ENCODE measurements at regions of chr9 and their contacts with region 1.

Region 1: GRCh38 chr9:121322037-121322775 is 47.8 kb downstream of the STOM start:
- DNase-seq: no peak
- ATAC-seq: peak; percentile 18
- H3K4me3 Mint-ChIP-seq: no peak overlapping the region
- H3K27ac Mint-ChIP-seq: no peak overlapping the region
- H3K4me1 Mint-ChIP-seq: peaks cover 14% of the 10 kb centered on the region
- H3K27me3 Mint-ChIP-seq: no peaks in the 10 kb centered on the region
- CTCF ChIP-seq: no peak

Region 2: DNA sequence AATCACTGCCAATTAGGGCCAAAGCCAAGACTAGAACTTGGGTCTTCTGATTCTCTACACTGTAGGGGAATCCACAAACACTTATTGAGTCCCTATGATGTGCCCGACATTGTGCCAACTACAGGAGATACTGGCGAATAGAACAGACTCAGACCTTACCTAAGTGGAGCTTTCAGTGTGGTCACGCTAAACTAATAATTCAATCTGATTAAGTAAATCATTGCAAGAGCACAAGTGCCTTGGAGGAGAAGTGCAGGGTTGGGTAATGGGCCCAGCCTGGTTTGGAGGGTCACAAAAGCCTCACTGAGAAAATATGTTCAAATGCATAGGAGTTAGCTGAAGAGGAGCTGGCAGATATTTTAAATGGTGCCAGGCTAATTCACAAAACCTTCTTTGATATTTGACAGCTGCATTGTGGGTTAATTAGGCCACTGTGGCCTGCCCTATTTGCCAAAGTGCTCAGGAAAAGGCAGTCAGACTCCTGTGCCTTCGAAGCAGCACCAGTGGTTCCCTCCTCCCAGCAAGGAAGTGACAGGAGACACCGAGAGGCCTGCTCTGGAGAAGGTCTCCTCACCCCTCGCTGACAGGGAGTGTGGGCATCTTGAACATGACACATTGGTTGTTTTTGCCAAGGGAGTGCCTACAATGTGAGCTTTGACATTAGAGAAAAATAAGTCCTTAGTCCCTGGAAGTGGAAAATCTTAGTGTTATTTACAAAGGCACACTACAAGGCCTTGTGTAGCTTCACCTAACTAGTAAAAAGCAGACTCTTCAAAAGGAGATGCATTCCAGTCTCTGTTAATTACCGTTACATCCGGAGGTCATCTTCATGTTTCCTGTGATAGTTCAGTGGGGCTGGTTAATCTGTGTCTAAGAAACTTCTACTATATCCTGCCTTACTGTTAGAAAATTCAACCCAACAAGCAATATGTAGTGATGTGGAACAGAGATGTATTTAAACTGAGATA is 371.5 kb before region 1 on chr9:
- CTCF ChIA-PET with region 1: no interaction called
- POLR2A ChIA-PET with region 1: no interaction called
- intact Hi-C with region 1: no loop called
- DNase-seq: no peak
- ATAC-seq: no peak
- H3K4me3 Mint-ChIP-seq: no peak overlapping the region
- H3K27ac Mint-ChIP-seq: no peak overlapping the region
- H3K4me1 Mint-ChIP-seq: no peaks in the 10 kb centered on the region
- H3K27me3 Mint-ChIP-seq: no peaks in the 10 kb centered on the region
- CTCF ChIP-seq: no peak

Region 3: DNA sequence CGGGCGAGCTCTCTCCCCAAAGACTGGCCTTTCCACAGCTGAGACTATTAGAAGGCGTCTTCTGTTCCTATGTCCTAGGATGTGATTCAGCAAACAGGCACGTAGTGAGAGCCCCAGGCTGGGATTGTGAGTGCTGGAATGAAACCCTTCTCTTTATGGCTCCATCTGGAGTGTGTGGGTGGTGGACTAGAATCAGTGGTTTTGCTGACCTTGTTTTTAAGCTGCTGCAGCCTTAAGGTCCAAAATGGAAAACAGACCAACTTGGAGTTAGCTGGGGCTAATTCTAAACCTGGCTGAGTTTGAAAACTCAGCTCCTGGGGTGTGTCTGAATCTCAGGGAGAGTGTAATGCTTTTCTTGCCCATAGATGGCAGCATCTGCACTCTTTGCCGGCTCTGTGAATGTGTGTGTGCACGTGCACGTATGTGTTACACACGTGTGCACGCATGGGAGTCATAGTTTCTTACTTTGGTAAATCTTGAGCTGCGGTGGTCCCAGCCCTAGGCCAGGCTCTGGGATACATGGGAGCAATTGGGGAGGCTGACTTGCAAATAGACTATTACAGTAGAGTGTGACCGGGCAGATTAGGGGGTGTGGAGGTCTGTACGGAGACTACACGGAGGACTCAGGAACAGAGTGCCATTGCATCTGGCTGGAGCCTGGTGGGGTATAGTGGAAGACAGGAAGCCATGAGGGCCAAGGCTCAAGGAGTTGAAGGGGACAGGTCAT is 43.5 kb before region 1 on chr9:
- CTCF ChIA-PET with region 1: interaction called, 26 read pairs
- POLR2A ChIA-PET with region 1: no interaction called
- intact Hi-C with region 1: no loop called
- DNase-seq: peak; percentile 73
- ATAC-seq: peak; percentile 93
- H3K4me3 Mint-ChIP-seq: no peak overlapping the region
- H3K27ac Mint-ChIP-seq: no peak overlapping the region
- H3K4me1 Mint-ChIP-seq: peaks cover 5% of the 10 kb centered on the region
- H3K27me3 Mint-ChIP-seq: no peaks in the 10 kb centered on the region
- CTCF ChIP-seq: peak; percentile 88

Region 4: DNA sequence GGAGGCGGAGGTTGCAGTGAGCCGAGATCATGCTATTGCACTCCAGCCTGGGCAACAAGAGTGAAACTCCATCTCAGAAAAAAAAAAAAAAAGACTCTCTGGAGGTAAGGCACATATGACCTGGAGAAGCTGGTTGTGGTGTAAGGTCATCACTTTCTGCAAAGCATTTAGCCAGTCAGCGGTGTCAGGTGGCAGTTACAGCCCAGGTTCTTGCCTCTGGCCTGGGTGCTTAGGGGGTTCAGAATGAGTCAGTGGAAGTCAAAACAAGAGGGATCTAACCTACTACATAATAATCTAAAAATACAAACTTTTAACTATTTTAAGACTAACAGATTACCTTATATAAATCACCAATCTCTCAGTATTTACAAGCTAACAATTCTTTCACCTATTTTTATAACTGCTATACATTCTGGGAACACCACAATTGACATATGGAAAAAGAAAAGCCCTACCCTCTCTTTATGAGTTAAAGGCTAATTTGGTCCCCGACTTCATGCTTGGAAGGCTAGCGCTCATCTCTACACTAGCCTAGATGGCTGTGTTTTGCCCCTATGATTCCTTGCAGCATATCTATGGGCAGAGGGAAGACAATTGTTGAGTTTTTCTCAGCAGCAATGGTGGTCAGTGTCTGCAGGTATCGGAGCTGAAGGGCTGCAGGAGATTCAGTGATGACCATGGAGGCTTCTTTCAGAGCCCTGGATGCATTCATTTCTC is 18.6 kb after region 1 on chr9:
- CTCF ChIA-PET with region 1: interaction called, 49 read pairs
- POLR2A ChIA-PET with region 1: no interaction called
- intact Hi-C with region 1: no loop called
- DNase-seq: peak; percentile 16
- ATAC-seq: peak; percentile 47
- H3K4me3 Mint-ChIP-seq: no peak overlapping the region
- H3K27ac Mint-ChIP-seq: no peak overlapping the region
- H3K4me1 Mint-ChIP-seq: peaks cover 12% of the 10 kb centered on the region
- H3K27me3 Mint-ChIP-seq: no peaks in the 10 kb centered on the region
- CTCF ChIP-seq: no peak

Region 5: DNA sequence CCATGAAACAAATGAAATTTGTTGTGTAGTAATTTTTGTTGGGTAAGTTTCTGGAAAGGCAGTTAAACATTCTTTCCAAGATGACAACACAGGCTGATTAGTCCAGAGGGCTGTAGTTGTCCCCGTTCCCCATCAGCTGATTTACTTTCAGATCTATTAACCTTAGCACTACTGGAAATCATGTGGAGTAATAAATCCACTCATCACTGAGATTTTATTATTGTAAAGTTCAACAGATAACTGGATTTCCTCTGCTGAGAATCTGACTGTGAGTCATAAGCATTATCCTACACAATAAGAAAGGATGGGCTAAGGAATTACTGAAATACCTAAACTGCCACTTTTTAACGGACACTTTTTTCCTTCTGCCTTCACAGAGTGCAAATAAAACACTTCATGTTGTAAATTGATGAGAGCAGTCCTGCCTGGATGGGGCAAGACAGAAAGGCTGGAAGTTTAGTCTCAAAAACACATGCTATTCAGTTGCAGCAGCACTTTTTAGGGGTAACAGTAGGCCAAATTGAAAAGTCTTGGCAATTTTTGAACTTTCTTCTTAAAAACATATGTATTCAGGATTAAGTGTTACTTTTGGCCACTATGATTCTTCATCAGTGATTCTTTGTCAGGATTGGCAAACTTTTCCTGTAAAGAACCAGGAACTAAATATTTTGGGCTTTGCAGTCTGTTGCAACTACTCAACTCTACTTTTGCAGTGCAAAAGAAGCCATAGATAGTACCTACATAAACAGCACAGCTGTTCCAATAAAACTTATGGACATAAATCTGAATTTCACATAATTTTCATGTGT is 40.8 kb after region 1 on chr9:
- CTCF ChIA-PET with region 1: interaction called, 20 read pairs
- POLR2A ChIA-PET with region 1: no interaction called
- intact Hi-C with region 1: no loop called
- DNase-seq: no peak
- ATAC-seq: no peak
- H3K4me3 Mint-ChIP-seq: no peak overlapping the region
- H3K27ac Mint-ChIP-seq: peak overlapping the region; percentile 47
- H3K4me1 Mint-ChIP-seq: peaks cover 71% of the 10 kb centered on the region
- H3K27me3 Mint-ChIP-seq: no peaks in the 10 kb centered on the region
- CTCF ChIP-seq: no peak

Region 6: GRCh38 chr9:121383715-121384114 is 61.5 kb after region 1 on chr9:
- CTCF ChIA-PET with region 1: interaction called, 142 read pairs
- POLR2A ChIA-PET with region 1: no interaction called
- intact Hi-C with region 1: no loop called
- DNase-seq: no peak
- ATAC-seq: no peak
- H3K4me3 Mint-ChIP-seq: no peak overlapping the region
- H3K27ac Mint-ChIP-seq: no peak overlapping the region
- H3K4me1 Mint-ChIP-seq: no peaks in the 10 kb centered on the region
- H3K27me3 Mint-ChIP-seq: no peaks in the 10 kb centered on the region
- CTCF ChIP-seq: no peak

Region 7: GRCh38 chr9:121455527-121456239 is 133.5 kb after region 1 on chr9:
- CTCF ChIA-PET with region 1: interaction called, 14 read pairs
- POLR2A ChIA-PET with region 1: no interaction called
- intact Hi-C with region 1: no loop called
- DNase-seq: peak; percentile 83
- ATAC-seq: peak; percentile 92
- H3K4me3 Mint-ChIP-seq: no peak overlapping the region
- H3K27ac Mint-ChIP-seq: peak overlapping the region; percentile 5
- H3K4me1 Mint-ChIP-seq: peaks cover 21% of the 10 kb centered on the region
- H3K27me3 Mint-ChIP-seq: peaks cover 29% of the 10 kb centered on the region
- CTCF ChIP-seq: no peak